Activated T-helper 2 cell treated with anti-CD3 and anti-CD28 coated beads, Interferon-gamma antibody, Interleukin-2, Interleukin-4, amounts not matched to agents 10 μg/mL and 5 μg/mL and 100 μg/mL, durations not matched to agents 14 hours and 24 hours and 36 hours (primary cell): ENCODE measurements at regions of chr17 and their contacts with region 1.

Region 1: GRCh38 chr17:49707608-49708514 is at the start of gene SLC35B1:
- DNase-seq: peak; percentile 98
- H3K4me3 Mint-ChIP-seq: peak within 1 kb of the TSS; percentile 88
- H3K27ac Mint-ChIP-seq: peak within 1 kb of the TSS; percentile 96
- H3K4me1 Mint-ChIP-seq: peaks cover 29% of the 10 kb centered on the region
- H3K27me3 Mint-ChIP-seq: no peaks in the 10 kb centered on the region
- total RNA-seq, gene SLC35B1: 75.7 and 80.7 TPM in 2 replicates

Region 2: GRCh38 chr17:49390548-49391324 is 317.1 kb before region 1 on chr17:
- intact Hi-C with region 1: no loop called
- DNase-seq: no peak
- H3K4me3 Mint-ChIP-seq: no peak overlapping the region
- H3K27ac Mint-ChIP-seq: peak overlapping the region; percentile 53
- H3K4me1 Mint-ChIP-seq: peaks cover 44% of the 10 kb centered on the region
- H3K27me3 Mint-ChIP-seq: peaks cover 4% of the 10 kb centered on the region

Region 3: DNA sequence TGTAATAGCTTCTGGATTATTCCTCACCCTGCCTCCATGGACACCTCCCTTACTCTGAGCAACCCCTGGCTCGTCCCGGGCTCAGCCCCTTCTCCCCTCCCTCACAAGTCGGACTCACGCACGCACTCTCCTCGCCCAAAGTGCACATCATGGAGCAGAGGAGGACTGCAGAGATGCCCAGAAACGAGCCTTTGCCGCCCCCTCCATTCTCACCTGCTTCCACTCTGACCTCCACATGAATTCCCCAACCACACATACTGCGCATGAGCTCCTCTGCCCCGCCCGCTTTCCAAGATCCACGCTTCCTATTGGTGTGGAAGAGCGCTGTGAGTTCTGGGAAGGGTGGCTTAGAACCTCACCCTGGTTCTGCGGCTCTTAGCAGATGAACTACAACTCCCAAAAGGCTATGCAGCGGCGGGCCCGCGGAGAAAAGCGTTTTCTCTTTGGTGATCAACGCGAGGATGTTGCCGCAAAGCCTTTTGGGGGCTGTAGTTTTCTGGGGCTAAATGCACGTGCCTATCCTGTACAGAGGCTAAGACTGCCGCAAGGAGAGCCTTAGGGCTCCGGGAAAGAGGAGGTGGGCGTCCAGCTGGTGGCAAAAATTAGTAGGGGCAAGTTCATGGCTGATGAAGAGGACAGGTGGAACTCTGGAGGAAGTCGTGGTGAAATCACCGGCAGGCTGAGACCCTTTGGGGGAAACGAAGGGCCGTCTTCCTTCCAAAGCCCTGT is 293.1 kb before region 1 on chr17 and contains the start of gene PHB1:
- intact Hi-C with region 1: loop called (anchors 2 kb)
- DNase-seq: peak; percentile 93
- H3K4me3 Mint-ChIP-seq: peak within 1 kb of the TSS; percentile 99
- H3K27ac Mint-ChIP-seq: peak within 1 kb of the TSS; percentile 87
- H3K4me1 Mint-ChIP-seq: peaks cover 10% of the 10 kb centered on the region
- H3K27me3 Mint-ChIP-seq: peaks cover 10% of the 10 kb centered on the region
- total RNA-seq, gene PHB1: 335 and 339 TPM in 2 replicates

Region 4: DNA sequence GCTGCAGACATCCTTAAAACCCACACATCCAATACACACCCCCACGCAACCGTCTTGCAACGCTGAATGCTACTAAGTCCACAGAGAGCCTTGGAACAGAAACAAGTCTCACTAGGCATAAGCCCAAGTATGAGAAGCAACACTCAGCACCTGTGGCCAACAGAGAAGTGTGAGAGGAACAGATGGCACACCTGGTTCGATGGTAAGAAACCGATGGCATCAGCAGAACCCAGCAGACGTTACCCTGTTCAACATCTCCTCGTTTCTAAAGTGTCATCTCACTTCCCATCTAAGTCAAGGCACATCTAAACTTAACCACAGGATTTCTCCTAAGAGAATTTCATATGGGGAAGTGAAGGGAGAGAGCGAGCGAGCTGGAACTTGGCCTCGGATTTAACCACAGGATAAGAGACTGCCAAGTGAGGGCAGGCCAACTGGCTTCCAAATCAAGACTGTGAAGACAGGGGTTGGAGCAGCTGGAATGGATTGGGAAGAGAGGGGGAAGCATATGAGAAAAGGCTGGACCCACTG is 91.2 kb before region 1 on chr17:
- intact Hi-C with region 1: no loop called
- DNase-seq: no peak
- H3K4me3 Mint-ChIP-seq: no peak overlapping the region
- H3K27ac Mint-ChIP-seq: no peak overlapping the region
- H3K4me1 Mint-ChIP-seq: peaks cover 21% of the 10 kb centered on the region
- H3K27me3 Mint-ChIP-seq: no peaks in the 10 kb centered on the region

Region 5: DNA sequence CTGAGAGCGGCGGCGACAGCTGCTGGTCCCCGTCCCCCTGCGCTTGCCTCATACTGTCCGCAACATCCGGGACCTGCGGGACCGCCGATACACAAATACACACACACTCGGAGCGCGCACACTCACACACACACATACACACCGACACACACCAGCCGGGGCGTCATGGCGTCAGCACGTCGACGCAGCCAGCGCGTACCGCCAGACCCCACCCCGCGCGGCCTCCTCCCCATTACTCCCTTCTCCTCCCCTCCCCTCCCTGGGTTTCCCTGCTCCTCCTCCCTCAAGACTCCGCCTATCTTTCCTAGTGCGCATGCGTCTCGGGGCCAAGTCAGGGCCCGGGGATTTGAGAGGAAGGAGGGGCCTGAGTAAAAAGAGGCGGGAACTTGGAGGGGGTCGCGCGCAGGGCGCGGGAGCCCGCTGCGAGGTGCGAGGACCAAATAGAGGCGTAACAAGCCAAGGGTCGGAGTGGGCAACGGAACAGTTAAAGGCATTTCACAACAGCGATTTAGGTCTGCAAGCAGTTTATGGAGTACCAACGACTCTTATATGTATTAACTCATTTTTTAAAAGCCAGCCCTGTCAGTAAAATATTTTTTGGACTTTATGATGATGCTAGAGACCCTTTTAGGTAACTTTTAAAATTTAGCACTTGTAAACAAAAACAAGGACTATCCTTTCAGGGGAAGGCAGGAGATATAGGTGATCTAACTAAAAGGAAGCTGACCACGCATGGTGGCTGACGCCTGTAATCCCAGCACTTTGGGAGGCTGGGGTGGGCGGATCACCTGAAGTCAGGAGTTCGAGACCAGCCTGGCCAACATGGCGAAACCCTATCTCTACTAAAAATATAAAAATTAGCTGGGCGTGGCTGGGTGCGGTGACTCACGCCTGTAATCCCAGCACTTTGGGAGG is 29.7 kb before region 1 on chr17 and contains the start of gene SPOP:
- intact Hi-C with region 1: loop called (anchors 1 kb)
- DNase-seq: peak; percentile 99
- H3K4me3 Mint-ChIP-seq: peak within 1 kb of the TSS; percentile 95
- H3K27ac Mint-ChIP-seq: peak within 1 kb of the TSS; percentile 98
- H3K4me1 Mint-ChIP-seq: peaks cover 33% of the 10 kb centered on the region
- H3K27me3 Mint-ChIP-seq: no peaks in the 10 kb centered on the region
- total RNA-seq, gene SPOP: 50.1 and 59.6 TPM in 2 replicates

Region 6: GRCh38 chr17:49694847-49695683 is 12.8 kb before region 1 on chr17:
- intact Hi-C with region 1: loop called (anchors 1 kb)
- DNase-seq: peak; percentile 46
- H3K4me3 Mint-ChIP-seq: no peak overlapping the region
- H3K27ac Mint-ChIP-seq: peak overlapping the region; percentile 88
- H3K4me1 Mint-ChIP-seq: peaks cover 22% of the 10 kb centered on the region
- H3K27me3 Mint-ChIP-seq: no peaks in the 10 kb centered on the region

Region 7: GRCh38 chr17:49739641-49740271 is 31.9 kb after region 1 on chr17:
- intact Hi-C with region 1: loop called (anchors 1 kb)
- DNase-seq: peak; percentile 89
- H3K4me3 Mint-ChIP-seq: peak overlapping the region; percentile 79
- H3K27ac Mint-ChIP-seq: peak overlapping the region; percentile 96
- H3K4me1 Mint-ChIP-seq: peaks cover 63% of the 10 kb centered on the region
- H3K27me3 Mint-ChIP-seq: no peaks in the 10 kb centered on the region

Region 8: GRCh38 chr17:49788478-49789242 is 80.8 kb after region 1 on chr17 and contains the start of gene KAT7:
- intact Hi-C with region 1: loop called (anchors 1 kb)
- DNase-seq: peak; percentile 98
- H3K4me3 Mint-ChIP-seq: peak within 1 kb of the TSS; percentile 91
- H3K27ac Mint-ChIP-seq: peak within 1 kb of the TSS; percentile 97
- H3K4me1 Mint-ChIP-seq: peaks cover 29% of the 10 kb centered on the region
- H3K27me3 Mint-ChIP-seq: no peaks in the 10 kb centered on the region
- total RNA-seq, gene KAT7: 62.1 and 65.0 TPM in 2 replicates